Panc1 (cell line): ENCODE measurements at regions of chr2 and their contacts with region 1.

Region 1: DNA sequence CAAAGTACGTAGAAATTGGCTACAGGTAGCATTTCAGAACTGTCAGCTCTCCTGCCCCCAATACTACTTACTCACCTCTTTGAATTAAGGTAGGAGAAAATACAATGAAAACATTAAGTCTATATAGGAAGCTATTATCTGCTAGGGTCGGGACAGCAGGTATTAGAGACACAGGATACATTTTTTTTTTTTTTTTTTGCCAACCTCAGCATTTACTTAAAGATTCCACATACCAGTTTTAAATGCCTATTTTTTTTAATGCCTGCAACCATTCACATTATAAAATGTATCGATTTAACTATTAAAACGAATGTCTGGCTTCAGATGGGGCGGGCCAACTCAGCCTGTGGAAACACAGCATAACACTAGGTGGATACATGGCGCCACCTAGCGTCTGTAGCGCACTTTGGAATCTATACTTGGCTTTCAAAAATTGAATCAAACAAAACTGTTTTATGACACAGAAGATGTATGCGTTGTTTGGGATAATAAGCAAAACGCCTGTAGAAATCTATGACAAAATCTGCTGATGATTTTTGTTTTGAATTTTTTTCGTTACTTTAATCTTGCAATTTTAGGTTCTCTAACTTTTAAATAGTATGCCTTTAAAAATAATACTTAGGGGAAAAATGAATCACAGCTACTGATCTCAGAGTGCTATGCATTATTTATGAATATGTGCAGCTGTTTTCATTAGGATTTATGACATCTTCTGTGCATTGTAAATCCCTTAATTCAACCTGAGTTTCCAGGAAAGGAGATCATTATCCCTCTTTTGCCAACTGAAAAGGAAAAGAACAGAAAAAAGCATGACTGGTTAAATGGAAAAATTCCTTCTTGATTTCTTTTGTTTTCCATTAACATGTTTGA is 261.0 kb downstream of the NYAP2 start:
- DNase-seq: no peak
- ATAC-seq: peak; percentile 86
- H3K4me3 ChIP-seq: no peak overlapping the region
- H3K27ac ChIP-seq: no peak overlapping the region
- H3K4me1 ChIP-seq: no peaks in the 10 kb centered on the region
- H3K27me3 ChIP-seq: no peaks in the 10 kb centered on the region; the same call in 1 of the 2 replicates
- CTCF ChIP-seq: peak; percentile 89

Region 2: DNA sequence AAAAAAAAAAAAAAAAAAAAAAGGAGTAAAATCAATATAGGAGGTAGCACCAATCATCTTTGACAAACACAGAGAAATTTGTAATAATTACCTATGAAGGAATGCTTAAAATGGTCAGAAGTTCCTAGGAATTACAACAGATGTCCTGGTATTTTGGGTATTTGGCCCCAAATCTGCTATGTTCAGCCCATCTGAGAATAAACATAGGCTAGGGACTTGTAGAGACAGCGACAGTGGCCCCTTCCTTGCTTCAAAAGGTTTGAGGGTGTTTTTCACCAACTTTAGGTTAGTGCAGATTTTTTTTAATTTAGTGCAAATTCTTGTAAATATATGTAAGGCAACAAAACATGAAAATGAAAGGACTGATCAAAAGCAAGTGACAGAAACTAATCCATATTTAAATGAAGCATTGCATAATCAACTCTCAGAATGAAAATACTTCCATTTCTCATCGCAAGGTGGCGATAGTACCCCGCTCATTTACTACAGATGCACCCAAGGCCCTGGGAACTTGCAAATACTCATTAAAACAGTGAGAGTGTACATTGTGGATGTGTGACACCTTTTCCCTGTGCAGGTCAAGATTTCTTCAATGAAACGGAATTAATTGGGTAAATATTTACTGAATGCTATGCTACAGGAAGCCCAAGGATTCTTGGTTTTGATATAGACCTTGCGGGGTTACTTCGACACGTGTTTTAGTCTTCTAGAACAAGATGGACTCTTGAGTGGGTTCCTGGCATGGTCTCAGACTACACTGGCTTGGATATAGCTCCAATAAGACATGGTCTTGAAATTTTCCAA is 1303.2 kb before region 1 on chr2:
- CTCF ChIA-PET with region 1: no interaction called
- POLR2A ChIA-PET with region 1: no interaction called
- in situ Hi-C with region 1: no loop called
- intact Hi-C with region 1: loop called (anchors 10 kb)
- DNase-seq: peak; percentile 69
- ATAC-seq: peak; percentile 86
- H3K4me3 ChIP-seq: no peak overlapping the region
- H3K27ac ChIP-seq: no peak overlapping the region
- H3K4me1 ChIP-seq: 0 out of 2 replicates have a peak, but pooled peaks cover 2% of the 10 kb centered on the region
- H3K27me3 ChIP-seq: no peaks in the 10 kb centered on the region
- CTCF ChIP-seq: peak; percentile 78

Region 3: DNA sequence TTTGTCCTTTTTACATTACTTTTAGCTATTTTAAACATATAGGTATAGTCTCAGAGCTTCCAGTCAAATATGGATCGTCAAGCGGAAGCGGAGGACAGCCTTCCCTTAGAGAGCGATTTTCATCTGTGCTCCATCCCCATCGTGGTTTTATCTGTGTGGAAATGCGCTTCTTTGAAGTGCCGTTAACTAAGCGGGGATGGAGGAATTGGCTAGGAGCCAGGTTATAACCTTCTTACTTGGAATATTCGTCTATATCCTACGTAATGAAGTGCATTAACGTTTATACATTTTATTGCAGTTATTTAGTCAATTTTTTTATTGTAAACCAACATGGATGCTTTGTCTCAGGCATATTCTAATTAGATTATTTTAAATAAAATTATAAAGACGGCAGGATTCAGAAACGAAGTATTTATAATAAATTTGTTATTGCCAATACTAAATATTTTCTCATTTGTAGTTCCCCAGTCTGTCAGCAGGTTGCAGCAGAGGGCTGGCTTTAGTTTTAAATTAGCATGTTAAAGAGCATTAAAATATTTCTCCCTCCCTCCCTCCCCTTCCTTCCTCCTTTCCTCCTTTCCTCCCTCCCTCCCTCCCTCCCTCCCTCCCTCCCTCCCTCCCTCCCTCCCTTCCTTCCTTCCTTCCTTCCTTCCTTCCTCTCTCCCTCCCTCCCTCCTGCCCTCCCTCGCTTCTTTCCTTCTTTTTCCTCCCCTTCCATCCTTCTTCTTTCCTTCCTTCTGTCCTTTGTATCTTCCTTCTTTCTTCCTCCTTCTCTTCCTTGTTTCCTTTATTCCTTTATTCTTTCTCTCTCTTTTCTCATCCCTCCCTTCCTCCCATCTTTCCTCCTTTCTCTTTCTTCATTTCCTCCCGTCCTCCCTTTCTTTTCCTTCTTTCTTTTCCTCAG is 537.7 kb before region 1 on chr2:
- CTCF ChIA-PET with region 1: interaction called, 4 read pairs
- POLR2A ChIA-PET with region 1: no interaction called
- in situ Hi-C with region 1: no loop called
- intact Hi-C with region 1: loop called (anchors 1 kb)
- DNase-seq: no peak
- ATAC-seq: no peak
- H3K4me3 ChIP-seq: no peak overlapping the region
- H3K27ac ChIP-seq: no peak overlapping the region
- H3K4me1 ChIP-seq: no peaks in the 10 kb centered on the region
- H3K27me3 ChIP-seq: no peaks in the 10 kb centered on the region
- CTCF ChIP-seq: peak; percentile 57; the same call in 1 of the 2 replicates

Region 4: GRCh38 chr2:225612635-225613034 is 47.9 kb before region 1 on chr2:
- CTCF ChIA-PET with region 1: no interaction called
- POLR2A ChIA-PET with region 1: no interaction called
- in situ Hi-C with region 1: no loop called
- intact Hi-C with region 1: no loop called
- DNase-seq: no peak
- ATAC-seq: no peak
- H3K4me3 ChIP-seq: no peak overlapping the region
- H3K27ac ChIP-seq: no peak overlapping the region
- H3K4me1 ChIP-seq: no peaks in the 10 kb centered on the region
- H3K27me3 ChIP-seq: no peaks in the 10 kb centered on the region
- CTCF ChIP-seq: no peak

Region 5: GRCh38 chr2:225649274-225649673 is 11.2 kb before region 1 on chr2:
- CTCF ChIA-PET with region 1: no interaction called
- POLR2A ChIA-PET with region 1: no interaction called
- in situ Hi-C with region 1: no loop called
- intact Hi-C with region 1: no loop called
- DNase-seq: no peak
- ATAC-seq: no peak
- H3K4me3 ChIP-seq: no peak overlapping the region
- H3K27ac ChIP-seq: no peak overlapping the region
- H3K4me1 ChIP-seq: no peaks in the 10 kb centered on the region
- H3K27me3 ChIP-seq: peaks cover 5% of the 10 kb centered on the region; the same call in 1 of the 2 replicates
- CTCF ChIP-seq: no peak; the same call in 1 of the 2 replicates

Region 6: DNA sequence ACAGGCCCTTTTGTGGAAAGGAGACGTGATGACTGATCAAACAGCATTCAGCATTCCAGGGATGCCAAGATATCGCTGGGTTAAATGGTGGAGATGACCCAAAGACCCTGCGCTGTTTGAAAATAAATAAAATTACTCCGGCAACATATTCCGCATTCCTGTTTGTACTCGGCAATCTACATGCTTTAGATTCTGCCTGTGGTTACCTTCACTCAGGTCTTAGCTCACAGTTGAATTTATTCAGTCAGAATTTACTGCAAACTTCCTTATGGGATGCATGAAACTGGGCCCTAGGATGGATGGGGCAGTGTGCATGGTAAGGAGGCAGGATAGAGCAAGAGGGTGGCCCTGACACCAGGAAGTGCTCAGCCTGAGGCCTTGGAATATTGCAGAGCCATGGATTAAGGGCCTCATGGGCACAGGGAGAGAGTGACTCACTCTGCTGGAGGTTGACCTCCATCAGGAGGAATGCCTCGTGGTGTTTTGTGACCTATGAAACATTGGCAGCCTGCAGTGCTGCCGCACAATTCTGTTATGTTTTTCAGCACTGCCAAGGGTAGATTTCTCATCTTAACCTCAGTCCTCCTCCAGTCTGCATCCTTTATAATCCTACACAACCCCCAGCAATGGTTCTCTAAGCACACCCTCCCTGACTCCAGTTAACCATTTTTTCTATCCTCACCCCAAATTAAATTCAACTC is 817.8 kb after region 1 on chr2:
- CTCF ChIA-PET with region 1: no interaction called
- POLR2A ChIA-PET with region 1: no interaction called
- in situ Hi-C with region 1: no loop called
- intact Hi-C with region 1: loop called (anchors 10 kb)
- DNase-seq: no peak
- ATAC-seq: peak; percentile 98
- H3K4me3 ChIP-seq: no peak overlapping the region
- H3K27ac ChIP-seq: peak overlapping the region; percentile 91
- H3K4me1 ChIP-seq: peaks cover 28% of the 10 kb centered on the region
- H3K27me3 ChIP-seq: no peaks in the 10 kb centered on the region
- CTCF ChIP-seq: no peak

Region 7: GRCh38 chr2:227238238-227239237 is 1578.0 kb after region 1 on chr2:
- CTCF ChIA-PET with region 1: no interaction called
- POLR2A ChIA-PET with region 1: no interaction called
- in situ Hi-C with region 1: no loop called
- intact Hi-C with region 1: loop called (anchors 10 kb)
- DNase-seq: peak; percentile 54
- ATAC-seq: peak; percentile 68; the same call in 1 of the 2 replicates
- H3K4me3 ChIP-seq: no peak overlapping the region
- H3K27ac ChIP-seq: no peak overlapping the region
- H3K4me1 ChIP-seq: no peaks in the 10 kb centered on the region
- H3K27me3 ChIP-seq: peaks cover 2% of the 10 kb centered on the region; the same call in 1 of the 2 replicates
- CTCF ChIP-seq: peak; percentile 93